Cardiac septum (tissue), 1 donor: ENCODE measurements at regions of chr6 and their contacts with region 1.

Region 1: DNA sequence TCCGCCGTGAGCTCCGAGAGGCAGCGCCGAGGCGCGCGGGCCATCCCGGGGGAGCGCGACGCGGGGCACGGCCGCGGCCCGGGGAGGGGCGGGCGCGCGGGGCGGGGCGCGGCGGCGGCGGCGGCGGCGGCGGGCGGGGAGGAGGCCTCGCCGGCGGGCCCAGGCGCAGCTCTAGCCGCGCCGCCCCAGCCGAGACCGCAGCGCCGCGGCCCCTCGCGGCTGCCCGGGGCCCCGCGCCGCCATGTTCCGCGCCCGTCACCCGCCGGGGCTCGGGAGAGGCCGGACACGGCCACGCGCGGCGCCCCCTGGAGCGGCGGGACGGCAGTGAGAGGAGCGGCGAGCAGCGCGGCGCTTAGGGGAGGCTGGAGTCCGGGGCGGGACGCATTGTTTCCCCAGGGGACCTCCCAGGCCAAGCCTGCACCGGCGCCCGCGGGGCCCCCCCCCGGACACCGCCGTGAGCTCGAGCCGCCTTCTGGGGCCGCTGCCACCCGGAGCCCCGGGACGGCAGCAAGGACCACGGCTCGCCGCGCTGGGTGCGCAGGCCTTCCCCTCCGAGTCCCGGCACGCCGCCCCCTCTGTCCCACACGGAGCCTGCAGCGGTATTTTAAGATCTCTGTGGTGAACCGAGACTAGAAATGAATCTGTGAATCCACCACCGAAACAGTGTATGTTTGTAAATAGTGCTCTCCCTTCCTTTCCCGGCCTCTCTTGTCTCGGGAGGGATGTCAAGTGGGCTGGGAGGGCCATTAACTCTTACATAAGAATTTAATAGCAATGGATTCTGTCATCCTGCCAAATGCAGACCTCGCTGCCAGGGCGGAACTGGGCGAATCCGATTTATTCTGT is at the start of gene KIF13A:
- DNase-seq: peak; percentile 85
- total RNA-seq, gene KIF13A: 145 TPM

Region 2: DNA sequence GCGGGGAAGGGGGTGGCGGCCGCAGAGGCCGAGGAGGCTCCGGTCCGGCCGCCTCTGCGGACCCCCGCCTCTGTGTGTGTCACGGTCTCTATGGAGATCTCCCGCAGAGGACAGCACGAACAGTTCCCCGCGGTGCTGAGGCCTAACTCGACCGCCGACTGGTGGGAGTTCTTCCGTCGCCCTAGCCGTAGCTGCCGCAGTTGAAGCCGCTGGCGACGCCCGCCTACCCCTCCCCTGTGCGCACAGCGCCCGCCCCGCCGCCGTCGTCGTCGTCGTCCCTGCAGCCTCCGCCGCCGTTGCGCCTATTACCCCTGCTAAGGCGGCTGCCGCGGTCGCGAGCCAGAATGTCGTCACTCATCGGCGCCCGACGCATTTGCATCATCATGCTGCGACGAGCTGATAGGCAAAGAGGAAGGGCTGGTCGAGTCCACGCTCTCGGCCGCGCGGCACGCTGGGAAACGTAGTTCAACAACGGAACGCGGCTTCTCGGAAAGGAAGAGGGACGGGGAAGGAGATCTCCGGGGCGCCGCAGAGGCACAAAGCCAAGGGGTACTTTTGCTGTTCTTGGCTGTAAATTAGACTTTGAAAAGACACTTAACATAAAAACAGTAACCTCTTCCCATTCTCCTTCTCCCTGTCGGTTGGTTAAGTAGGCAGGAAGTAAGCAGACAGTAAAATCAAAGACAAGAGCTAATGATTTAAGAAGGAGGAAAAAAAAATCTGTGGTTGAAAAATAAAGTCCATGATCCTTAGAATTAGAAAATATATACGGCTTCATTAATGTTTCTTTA is 281.0 kb before region 1 on chr6 and contains the start of gene NUP153:
- intact Hi-C with region 1: loop called (anchors 10 kb)
- DNase-seq: peak; percentile 100
- total RNA-seq, gene NUP153: 25.8 TPM

Region 3: DNA sequence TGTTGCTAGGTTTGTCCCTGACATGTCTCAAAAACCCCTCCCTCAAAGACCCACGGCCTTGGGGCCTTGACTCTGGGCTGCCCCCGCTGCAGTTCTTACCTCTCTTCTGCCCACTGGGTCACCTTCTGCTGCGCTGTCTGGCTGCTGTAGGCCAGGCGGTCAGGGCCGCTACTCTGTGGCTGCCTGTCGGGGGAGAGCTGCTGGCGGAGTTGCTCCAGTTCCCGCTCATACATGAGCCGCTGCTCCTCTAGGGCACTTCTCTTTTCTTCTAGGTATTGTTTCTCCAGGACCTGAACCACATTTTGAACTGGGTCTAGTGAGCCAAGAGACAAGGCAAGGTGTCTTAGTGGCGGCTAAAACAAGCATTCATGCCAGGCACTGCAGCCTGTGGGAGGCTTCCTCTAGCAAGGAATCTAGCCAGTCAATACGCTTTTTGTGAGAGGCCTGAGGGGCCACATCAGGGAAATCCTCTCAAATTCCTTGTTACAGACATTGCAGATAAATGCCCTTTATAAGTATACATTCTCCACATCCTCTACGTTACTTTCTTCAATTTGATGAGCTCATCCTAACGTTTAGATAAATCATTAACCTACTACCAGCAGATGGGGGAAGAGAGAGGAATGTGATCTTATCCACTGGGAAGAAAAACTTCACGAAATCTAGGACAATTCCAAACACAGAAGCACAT is 170.7 kb before region 1 on chr6:
- intact Hi-C with region 1: loop called (anchors 5 kb)
- DNase-seq: no peak

Region 4: GRCh38 chr6:17865798-17866725 is 121.7 kb before region 1 on chr6:
- intact Hi-C with region 1: loop called (anchors 5 kb)
- DNase-seq: peak; percentile 85

Region 5: DNA sequence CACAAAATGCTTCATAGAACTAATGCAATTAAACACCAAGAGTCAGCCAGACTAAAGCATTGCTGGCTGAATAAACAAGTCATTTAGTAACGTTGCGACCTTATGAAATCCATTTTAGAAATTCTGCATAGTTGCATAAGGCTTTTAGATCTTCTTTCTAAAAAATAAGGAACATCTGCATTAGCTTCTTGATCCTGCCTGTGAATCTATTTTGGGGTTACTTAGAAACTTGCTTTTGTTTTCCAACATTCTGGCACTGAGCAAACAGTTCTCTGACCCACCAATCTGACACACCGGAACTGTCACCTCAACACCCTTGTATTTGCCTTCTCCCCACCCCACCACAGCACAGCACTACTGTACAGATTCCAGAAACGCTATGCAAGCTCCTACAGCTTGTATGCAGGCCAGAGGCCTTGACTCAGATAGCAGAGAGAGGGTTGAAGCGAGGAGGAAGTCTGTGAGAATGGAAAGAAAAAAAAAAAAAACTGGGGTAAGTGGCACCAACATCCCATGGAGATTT is 55.4 kb before region 1 on chr6:
- intact Hi-C with region 1: loop called (anchors 2 kb)
- DNase-seq: peak; percentile 79

Region 6: DNA sequence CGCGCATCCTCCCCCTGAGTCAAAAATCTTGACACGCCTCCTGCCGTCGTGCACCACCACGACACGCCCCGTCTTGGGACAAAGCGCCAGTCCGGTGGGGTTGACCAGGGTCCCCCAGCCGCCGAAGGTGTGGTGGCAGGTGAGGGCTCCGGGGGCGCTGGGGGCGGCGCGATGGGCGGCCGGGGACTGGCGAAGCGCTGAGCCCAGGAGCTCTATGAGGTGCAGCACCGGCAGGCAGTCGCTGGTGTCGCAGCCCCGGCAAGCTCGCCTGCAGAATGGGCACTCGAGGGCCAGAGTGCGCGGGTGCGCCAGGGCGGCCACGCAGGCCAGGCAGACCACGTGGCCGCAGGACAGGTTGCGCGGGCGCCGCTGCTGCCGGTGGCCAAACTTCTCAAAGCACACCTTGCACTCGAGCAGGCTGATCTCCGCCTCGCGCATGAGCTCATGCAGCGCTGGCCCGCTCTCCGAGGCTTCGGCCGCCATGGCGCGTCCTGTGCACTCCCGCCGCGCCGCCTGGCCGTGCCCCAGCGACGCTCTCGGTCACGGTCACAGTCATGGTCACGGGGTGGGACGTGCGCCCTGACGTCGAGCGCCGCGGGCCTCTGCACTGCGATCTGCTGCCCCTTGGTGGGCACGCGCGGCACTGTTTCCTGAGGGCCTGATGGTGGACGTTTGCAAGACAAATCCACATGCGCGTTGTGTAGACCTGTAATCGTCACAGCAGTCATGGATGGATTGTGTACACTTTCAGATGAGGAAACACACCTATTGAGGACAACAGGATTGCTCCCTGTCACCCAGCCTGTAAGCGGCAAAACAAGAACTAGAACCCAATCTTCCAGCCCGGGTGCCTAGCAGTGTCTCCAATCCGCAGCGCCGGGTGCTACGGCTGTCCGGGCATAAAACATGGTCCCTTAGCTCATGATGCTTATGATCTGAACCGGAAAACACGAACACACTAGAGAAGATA is 134.6 kb after region 1 on chr6 and contains the start of gene NHLRC1:
- intact Hi-C with region 1: loop called (anchors 2 kb)
- DNase-seq: peak; percentile 93
- total RNA-seq, gene NHLRC1: 1.6 TPM